Sigmoid colon (tissue), 7 donors: ENCODE measurements at regions of chr13 and their contacts with region 1.

Region 1: DNA sequence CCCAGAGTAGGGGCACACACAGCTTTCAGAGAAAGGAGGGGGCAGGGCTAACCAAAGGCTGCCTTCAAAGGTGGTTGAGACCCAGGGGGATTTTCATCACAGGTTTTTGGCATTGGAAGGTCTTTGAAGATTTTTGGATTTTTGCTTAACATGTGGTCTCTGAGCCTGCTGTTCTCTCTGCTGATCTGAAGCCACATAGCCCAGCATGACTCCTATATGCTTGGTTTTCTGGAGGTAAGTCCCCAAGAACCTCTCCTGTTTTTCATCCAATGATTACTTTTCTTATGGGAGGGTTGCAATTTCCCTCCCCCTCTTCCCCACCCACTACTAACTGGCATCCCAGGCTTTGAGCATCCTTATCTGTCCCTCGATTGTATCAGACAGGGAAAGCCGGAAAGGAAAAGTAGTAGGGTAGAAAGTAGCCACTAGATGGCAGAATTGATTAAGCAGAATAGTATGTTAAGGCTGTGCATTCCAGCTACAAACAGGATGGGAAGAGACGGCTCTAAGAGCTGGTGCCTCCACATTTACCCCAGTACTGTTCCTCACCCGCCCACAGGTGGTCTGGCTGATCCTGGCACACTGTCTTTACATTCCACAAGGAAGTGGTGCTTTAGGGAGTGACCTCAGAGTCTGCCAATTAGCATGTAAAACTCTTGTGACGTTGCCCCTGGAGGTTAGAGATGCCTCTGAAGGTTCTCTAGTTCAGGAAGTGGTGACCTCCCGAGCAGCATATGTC is 218.9 kb upstream of the EDNRB start:
- DNase-seq: no peak
- H3K4me3 ChIP-seq: no peak overlapping the region
- H3K27ac ChIP-seq: no peak overlapping the region
- H3K4me1 ChIP-seq: no peaks in the 10 kb centered on the region
- H3K27me3 ChIP-seq: no peaks in the 10 kb centered on the region
- CTCF ChIP-seq: peak; percentile 7 to 63 (median 38)
- EP300 ChIP-seq: no peak
- POLR2A ChIP-seq: no peak

Region 2: DNA sequence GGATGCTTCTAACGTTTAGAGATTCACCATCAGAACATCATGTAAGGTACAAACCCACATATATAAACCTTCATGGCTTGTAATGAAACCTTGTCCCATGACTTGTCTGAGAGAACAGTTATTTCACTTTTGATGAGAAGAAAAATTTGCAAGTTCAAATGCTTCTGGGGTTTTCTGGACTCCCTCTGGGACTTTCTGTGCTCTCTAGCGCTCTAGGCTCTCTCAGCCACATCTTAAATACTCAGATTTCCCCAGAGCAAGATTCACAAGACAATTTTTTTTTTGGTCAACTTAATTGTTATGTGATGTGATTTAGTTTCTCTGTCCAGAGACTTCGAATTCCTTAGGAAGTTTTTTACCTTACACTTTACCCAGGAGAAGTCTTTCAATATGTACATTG is 63.8 kb after region 1 on chr13:
- intact Hi-C with region 1: no loop called
- DNase-seq: no peak
- H3K4me3 ChIP-seq: no peak overlapping the region
- H3K27ac ChIP-seq: no peak overlapping the region
- H3K4me1 ChIP-seq: no peaks in the 10 kb centered on the region
- H3K27me3 ChIP-seq: no peaks in the 10 kb centered on the region
- CTCF ChIP-seq: no peak
- EP300 ChIP-seq: no peak
- POLR2A ChIP-seq: no peak

Region 3: DNA sequence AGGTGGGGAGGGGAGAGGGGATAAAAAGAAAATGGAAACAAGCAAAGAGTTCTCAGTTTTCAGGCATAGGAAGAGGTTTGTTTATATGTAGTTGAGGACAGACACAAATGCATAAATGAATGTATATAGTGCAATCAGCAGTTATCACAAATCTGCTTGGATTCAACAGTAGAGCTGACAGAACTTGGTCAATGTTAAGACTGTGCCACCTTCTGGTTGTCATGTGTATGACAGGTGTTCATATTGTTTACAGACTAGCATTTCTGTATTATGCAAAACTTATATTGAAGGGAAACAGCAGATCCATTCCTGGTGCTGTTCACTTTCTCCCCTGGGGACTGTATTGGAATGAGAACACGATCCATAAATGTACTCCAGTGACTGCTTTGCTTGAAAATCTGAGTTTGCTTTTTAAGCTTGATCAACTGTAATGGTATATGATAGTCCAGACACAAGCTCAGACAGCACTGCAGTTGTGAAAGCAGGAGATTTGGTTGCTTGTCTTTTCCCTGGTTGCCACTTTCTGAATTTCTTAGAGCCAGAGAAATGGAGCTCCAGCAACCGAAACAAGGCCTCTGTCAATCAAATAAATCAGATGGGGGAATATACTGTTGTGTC is 840.9 kb after region 1 on chr13:
- intact Hi-C with region 1: loop called (anchors 1 kb)
- DNase-seq: no peak
- H3K4me3 ChIP-seq: no peak overlapping the region
- H3K27ac ChIP-seq: no peak overlapping the region
- H3K4me1 ChIP-seq: no peaks in the 10 kb centered on the region
- H3K27me3 ChIP-seq: no peaks in the 10 kb centered on the region
- CTCF ChIP-seq: peak in 3 of 4 experiments; percentile 46 to 55 (median 47)
- EP300 ChIP-seq: no peak
- POLR2A ChIP-seq: no peak

Region 4: DNA sequence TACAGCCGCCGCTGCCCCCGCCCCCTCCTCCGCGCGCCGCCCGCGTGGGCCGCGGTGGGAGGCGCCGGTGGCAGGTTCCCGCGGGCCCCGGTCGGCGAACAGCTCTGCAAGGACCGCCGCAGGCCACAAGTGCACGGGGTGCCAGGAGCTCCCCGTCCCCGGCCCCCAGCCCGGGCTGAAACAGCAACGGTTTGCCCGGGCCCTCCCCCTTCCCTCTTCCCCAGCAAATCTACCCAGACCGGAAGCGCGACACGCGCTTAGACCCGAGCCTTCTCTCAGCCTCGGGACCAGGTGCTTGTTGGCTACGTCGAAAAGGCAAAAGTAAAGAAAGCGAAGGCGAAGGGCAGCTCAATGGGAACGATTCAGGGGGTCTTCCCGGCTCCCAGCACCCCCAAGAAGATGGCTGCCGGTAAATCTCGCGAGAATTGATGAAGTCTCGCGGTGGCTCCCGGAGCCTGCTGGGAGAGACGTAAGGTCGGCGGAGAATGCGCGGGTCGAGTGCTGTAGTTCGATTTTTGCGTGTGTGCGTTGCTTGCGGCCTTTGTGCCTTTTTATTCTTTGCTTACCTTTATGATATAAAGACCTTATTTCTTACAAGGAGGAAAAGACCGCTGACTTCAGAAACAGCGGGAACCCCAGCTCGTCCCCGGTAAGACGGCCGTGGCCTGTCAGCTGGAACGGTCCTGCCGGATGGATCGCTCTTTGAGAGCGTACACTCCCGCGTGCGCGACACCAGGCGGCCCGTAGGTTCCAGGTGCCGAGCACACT is 1268.4 kb after region 1 on chr13 and contains the start of gene RBM26:
- intact Hi-C with region 1: loop called (anchors 10 kb)
- DNase-seq: peak; percentile 96
- H3K4me3 ChIP-seq: peak within 1 kb of the TSS; percentile 82 to 87 (median 86)
- H3K27ac ChIP-seq: peak within 1 kb of the TSS; percentile 93 to 97 (median 95)
- H3K4me1 ChIP-seq: peaks cover 0 to 54% (median 41%) of the 10 kb centered on the region in 4 donors
- H3K27me3 ChIP-seq: no peaks in the 10 kb centered on the region
- CTCF ChIP-seq: peak in 2 of 4 experiments; percentile 11 to 15
- EP300 ChIP-seq: no peak
- POLR2A ChIP-seq: peak; percentile 40 to 69
- total RNA-seq, gene RBM26: 29.6 to 47.4 (median 38.0) TPM